Dorsolateral prefrontal cortex (tissue), 120 donors: ENCODE measurements at regions of chr20 and their contacts with region 1.

Region 1: GRCh38 chr20:2451939-2452732 is 18.5 kb downstream of the SNRPB start:
- DNase-seq: peak; percentile 47 to 86 (median 74)
- H3K4me3 ChIP-seq: no peak overlapping the region
- H3K27ac ChIP-seq: peak overlapping the region in 1 of 59 donors; percentile 5
- H3K27me3 ChIP-seq: no peaks in the 10 kb centered on the region
- CTCF ChIP-seq: peak; percentile 69 to 91 (median 83)

Region 2: GRCh38 chr20:2206957-2207769 is 245.0 kb before region 1 on chr20:
- intact Hi-C with region 1: loop called (anchors 2 to 5 kb)
- DNase-seq: peak; percentile 45 to 83 (median 66)
- H3K4me3 ChIP-seq: peak overlapping the region; percentile 38 to 77 (median 63)
- H3K27ac ChIP-seq: peak overlapping the region in 25 of 59 donors; percentile 3 to 77 (median 48)
- H3K27me3 ChIP-seq: peaks cover 0 to 31% (median 0%) of the 10 kb centered on the region in 45 donors
- CTCF ChIP-seq: peak; percentile 27 to 84 (median 72)

Region 3: GRCh38 chr20:2314759-2315439 is 137.2 kb before region 1 on chr20:
- intact Hi-C with region 1: no loop called
- DNase-seq: no peak
- H3K4me3 ChIP-seq: no peak overlapping the region
- H3K27ac ChIP-seq: no peak overlapping the region
- H3K27me3 ChIP-seq: peaks cover 0 to 3% (median 0%) of the 10 kb centered on the region in 45 donors
- CTCF ChIP-seq: no peak

Region 4: DNA sequence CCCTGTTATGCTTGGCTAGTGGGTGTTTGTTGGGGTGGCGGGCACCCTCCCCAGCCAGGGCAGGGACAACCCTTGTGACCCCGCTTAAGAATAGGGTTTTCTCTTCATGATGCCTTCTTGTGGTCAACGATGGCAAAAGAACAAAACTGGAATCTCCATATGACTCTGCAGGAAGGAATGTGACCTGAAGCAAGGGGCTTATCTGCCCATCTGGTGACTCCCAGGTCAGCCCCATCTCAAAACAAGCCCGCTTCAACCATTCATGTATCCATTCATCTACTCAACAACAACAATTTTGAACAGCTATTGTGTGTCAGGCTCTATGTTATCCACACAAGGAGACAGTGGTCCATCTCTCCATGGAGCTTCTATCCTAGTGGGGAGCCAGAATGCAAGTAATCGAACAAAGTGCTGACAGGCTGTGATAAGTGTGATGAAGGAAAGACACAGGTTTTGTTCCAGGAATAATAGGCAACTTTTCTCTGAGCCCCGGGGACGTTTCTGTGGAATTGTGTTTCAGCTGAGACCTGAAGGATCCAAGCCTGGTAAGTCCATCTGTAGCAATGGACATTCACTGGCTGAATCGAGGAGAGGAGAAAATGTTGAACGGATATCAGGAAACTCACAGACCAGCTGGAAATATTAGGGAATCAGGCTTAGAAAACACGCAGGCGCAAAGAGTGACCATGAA is 102.2 kb before region 1 on chr20:
- intact Hi-C with region 1: loop called in 1 of 2 experiments (anchors 2 kb)
- DNase-seq: no peak
- H3K4me3 ChIP-seq: no peak overlapping the region
- H3K27ac ChIP-seq: no peak overlapping the region
- H3K27me3 ChIP-seq: peaks cover 0 to 4% (median 0%) of the 10 kb centered on the region in 45 donors
- CTCF ChIP-seq: no peak